MCF 10A (cell line): ENCODE measurements at regions of chr7 and their contacts with region 1.

Region 1: DNA sequence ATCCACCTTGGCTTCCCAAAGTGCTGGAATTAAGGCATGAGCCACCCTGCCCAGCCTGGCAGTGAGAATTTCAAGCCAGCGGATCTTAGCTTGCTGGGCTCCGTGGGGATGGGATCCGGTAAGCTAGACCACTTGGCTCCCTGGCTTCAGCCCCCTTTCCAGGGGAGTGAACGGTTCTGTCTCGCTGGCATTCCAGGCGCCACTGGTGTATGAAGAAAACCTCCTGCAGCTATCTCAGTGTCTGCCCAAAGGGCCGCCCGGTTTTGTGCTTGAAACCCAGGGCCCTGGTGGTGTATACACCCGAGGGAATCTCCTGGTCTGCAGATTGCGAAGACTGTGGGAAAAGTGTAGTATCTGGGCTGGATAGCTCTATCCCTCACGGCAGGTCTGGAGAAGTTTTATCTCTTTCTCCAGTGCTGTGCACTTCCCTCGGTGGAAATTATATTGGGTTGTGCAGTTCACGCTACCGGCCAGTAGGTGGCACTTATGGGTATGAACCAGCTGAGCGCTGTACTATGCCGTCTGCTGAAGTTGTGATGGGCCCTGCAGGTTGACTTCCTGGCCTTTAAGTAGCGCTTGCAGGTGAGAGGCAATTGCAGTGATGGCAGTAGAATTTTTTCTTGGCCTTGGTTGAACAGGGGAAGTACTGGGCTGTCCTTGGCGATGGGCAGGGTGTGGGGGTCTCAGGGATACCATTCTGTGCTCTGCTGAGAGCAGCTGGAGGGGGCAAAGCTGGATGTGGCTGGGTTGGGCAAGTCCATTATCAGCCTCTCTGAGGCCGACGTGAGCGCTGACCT is 138.0 kb upstream of the MTPN start:
- DNase-seq: peak; percentile 51
- H3K4me3 Mint-ChIP-seq: no peak overlapping the region
- H3K27ac Mint-ChIP-seq: no peak overlapping the region
- H3K4me1 Mint-ChIP-seq: no peaks in the 10 kb centered on the region
- H3K27me3 Mint-ChIP-seq: peaks cover 40% of the 10 kb centered on the region
- CTCF ChIP-seq: peak; percentile 65

Region 2: DNA sequence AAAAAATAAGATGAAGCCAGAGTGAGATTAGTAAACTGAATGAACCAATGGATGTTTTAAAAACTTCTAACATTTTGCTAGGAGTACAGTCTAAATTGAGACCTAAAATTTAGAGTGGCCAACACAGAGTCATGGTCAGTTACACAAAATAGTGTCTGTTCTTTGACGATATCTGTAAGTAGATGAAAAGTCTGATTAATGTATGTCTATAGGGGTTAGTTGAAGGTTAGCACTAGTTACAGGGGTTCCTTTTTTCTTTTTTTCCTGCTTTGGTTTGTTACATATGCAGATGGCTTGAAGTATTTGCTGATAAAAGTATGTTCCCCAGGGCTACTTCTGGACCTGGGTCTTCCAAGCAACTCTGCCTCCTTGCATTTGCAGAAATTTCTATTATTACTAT is 47.9 kb before region 1 on chr7:
- CTCF ChIA-PET with region 1: no interaction called
- POLR2A ChIA-PET with region 1: no interaction called
- intact Hi-C with region 1: no loop called
- DNase-seq: no peak
- H3K4me3 Mint-ChIP-seq: no peak overlapping the region
- H3K27ac Mint-ChIP-seq: no peak overlapping the region
- H3K4me1 Mint-ChIP-seq: no peaks in the 10 kb centered on the region
- H3K27me3 Mint-ChIP-seq: peaks cover 29% of the 10 kb centered on the region
- CTCF ChIP-seq: no peak

Region 3: GRCh38 chr7:136104269-136104603 is 10.9 kb before region 1 on chr7:
- CTCF ChIA-PET with region 1: interaction called, 16 read pairs
- POLR2A ChIA-PET with region 1: no interaction called
- intact Hi-C with region 1: no loop called
- DNase-seq: no peak
- H3K4me3 Mint-ChIP-seq: no peak overlapping the region
- H3K27ac Mint-ChIP-seq: no peak overlapping the region
- H3K4me1 Mint-ChIP-seq: no peaks in the 10 kb centered on the region
- H3K27me3 Mint-ChIP-seq: no peaks in the 10 kb centered on the region
- CTCF ChIP-seq: no peak